ENCODE measurements at regions of chr14 and their contacts with region 1.

Region 1: GRCh38 chr14:35404449-35405303 is at the start of gene NFKBIA:
- DNase-seq: peak; percentile 98
- ATAC-seq: peak; percentile 69
- H3K4me3 ChIP-seq: peak within 1 kb of the TSS; percentile 74 to 99 (median 97)
- H3K4me3 Mint-ChIP-seq: peak within 1 kb of the TSS; percentile 95
- H3K27ac ChIP-seq: peak within 1 kb of the TSS; percentile 96 to 98
- H3K27ac Mint-ChIP-seq: peak within 1 kb of the TSS; percentile 99
- H3K4me1 ChIP-seq: peaks cover 49 to 53% of the 10 kb centered on the region in 2 donors
- H3K4me1 Mint-ChIP-seq: peaks cover 60% of the 10 kb centered on the region
- H3K27me3 ChIP-seq: no peaks in the 10 kb centered on the region
- H3K27me3 Mint-ChIP-seq: no peaks in the 10 kb centered on the region
- CTCF ChIP-seq: peak; percentile 12
- total RNA-seq, gene NFKBIA: 287 and 308 TPM in 2 replicates

Region 2: DNA sequence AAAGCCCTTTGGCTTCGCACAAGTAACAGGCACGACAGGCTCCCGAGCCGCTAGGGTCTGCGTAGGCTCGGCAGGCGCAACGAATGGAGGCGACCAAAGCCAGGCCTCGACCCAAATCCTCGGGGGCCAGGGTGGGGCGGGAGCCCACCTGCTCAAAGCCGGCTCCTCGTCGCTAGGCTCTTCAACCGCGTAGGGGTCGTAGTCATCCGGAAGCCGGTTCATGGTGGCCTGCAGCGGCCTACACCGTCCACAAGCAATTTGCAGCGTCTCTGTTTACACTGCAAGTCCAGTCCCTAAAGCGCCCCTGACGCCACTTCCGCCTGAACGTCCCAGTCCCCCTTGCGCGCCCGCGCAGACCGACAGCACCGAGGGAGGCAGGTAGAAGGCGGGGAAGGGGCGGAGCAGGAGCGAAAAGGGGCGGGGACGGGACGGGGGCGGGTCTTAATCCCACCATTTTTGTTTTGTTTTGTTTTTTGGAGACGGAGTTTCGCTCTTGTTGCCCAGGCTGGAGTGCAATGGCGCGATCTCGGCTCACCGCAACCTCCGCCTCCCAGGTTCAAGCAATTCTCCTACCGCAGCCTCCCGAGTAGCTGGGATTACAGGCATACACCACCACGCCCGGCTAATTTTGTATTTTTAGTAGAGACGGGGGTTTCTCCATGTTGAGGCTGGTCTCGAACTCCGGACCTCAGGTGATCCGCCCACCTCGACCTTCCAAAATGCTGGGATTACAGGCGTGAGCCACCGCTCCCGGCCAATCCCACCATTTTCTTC is 865.1 kb before region 1 on chr14 and contains the start of gene EAPP:
- CTCF ChIA-PET with region 1: no interaction called
- POLR2A ChIA-PET with region 1: interaction called, 3 read pairs
- intact Hi-C with region 1: loop called (anchors 5 kb)
- DNase-seq: peak; percentile 96
- ATAC-seq: peak; percentile 99
- H3K4me3 ChIP-seq: peak within 1 kb of the TSS; percentile 44 to 97 (median 89)
- H3K4me3 Mint-ChIP-seq: peak within 1 kb of the TSS; percentile 99
- H3K27ac ChIP-seq: peak within 1 kb of the TSS; percentile 91 to 97
- H3K27ac Mint-ChIP-seq: peak within 1 kb of the TSS; percentile 99
- H3K4me1 ChIP-seq: peaks cover 18 to 24% of the 10 kb centered on the region in 2 donors
- H3K4me1 Mint-ChIP-seq: peaks cover 21% of the 10 kb centered on the region
- H3K27me3 ChIP-seq: no peaks in the 10 kb centered on the region
- H3K27me3 Mint-ChIP-seq: no peaks in the 10 kb centered on the region
- CTCF ChIP-seq: no peak
- total RNA-seq, gene EAPP: 54.8 and 58.0 TPM in 2 replicates

Region 3: DNA sequence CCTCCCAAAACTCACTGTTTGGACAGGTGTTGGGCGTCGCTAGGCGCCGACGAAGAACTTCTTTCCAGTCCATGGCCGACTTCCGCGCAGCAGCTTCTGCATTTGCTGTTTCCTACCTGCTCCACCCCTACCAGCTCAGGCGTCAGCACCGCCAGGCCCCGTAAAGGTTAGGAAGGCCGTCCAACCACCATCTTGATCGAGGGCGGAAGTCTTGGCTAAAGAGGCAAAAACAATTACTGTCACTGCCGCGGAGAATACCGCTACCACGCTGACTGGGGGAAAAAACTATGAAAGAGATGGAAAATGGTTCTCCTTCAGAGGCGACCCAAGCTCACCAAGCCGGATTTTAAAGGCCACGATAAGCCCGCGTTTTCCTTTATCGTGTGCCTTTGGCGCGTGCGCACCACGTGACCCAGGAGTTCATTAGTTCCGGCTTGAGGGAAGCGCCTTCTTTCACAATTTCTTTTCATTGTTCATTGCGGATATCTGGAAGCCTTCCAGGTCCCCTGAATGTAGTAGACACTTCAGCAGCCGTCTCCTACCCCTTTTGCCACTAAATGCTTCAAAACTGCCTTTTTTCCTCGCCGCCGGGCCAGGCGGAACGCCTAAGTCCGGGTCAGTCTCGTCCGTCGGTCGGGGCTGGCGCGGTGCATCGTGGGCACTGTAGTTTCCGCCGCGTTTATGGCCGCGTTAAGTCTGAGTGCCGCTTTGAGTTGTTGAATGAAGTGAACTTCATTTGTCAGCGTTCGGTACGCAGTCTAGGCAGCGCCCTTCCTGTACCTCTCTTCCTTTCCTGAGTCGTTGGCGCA is 282.6 kb before region 1 on chr14 and contains the starts of genes PPP2R3C and PRORP:
- CTCF ChIA-PET with region 1: interaction called, 7 read pairs
- POLR2A ChIA-PET with region 1: interaction called, 30 read pairs
- intact Hi-C with region 1: loop called (anchors 1 kb)
- DNase-seq: peak; percentile 97
- ATAC-seq: peak; percentile 89
- H3K4me3 ChIP-seq: peak within 1 kb of the TSS; percentile 70 to 97 (median 77)
- H3K4me3 Mint-ChIP-seq: peak within 1 kb of the TSS; percentile 100
- H3K27ac ChIP-seq: peak within 1 kb of the TSS; percentile 94 to 100
- H3K27ac Mint-ChIP-seq: peak within 1 kb of the TSS; percentile 99
- H3K4me1 ChIP-seq: peaks cover 19 to 24% of the 10 kb centered on the region in 2 donors
- H3K4me1 Mint-ChIP-seq: peaks cover 53% of the 10 kb centered on the region
- H3K27me3 ChIP-seq: no peaks in the 10 kb centered on the region
- H3K27me3 Mint-ChIP-seq: no peaks in the 10 kb centered on the region
- CTCF ChIP-seq: no peak
- total RNA-seq, gene PPP2R3C: 40.8 and 41.7 TPM in 2 replicates
- total RNA-seq, gene PRORP: 16.4 and 22.2 TPM in 2 replicates

Region 4: GRCh38 chr14:35229495-35230089 is 175.1 kb before region 1 on chr14:
- CTCF ChIA-PET with region 1: interaction called, 302 read pairs
- POLR2A ChIA-PET with region 1: interaction called, 9 read pairs
- intact Hi-C with region 1: loop called (anchors 1 kb)
- DNase-seq: peak; percentile 57
- ATAC-seq: peak; percentile 36
- H3K4me3 ChIP-seq: no peak overlapping the region
- H3K4me3 Mint-ChIP-seq: no peak overlapping the region
- H3K27ac ChIP-seq: no peak overlapping the region
- H3K27ac Mint-ChIP-seq: no peak overlapping the region
- H3K4me1 ChIP-seq: no peaks in the 10 kb centered on the region
- H3K4me1 Mint-ChIP-seq: no peaks in the 10 kb centered on the region
- H3K27me3 ChIP-seq: no peaks in the 10 kb centered on the region
- H3K27me3 Mint-ChIP-seq: no peaks in the 10 kb centered on the region
- CTCF ChIP-seq: peak; percentile 67

Region 5: DNA sequence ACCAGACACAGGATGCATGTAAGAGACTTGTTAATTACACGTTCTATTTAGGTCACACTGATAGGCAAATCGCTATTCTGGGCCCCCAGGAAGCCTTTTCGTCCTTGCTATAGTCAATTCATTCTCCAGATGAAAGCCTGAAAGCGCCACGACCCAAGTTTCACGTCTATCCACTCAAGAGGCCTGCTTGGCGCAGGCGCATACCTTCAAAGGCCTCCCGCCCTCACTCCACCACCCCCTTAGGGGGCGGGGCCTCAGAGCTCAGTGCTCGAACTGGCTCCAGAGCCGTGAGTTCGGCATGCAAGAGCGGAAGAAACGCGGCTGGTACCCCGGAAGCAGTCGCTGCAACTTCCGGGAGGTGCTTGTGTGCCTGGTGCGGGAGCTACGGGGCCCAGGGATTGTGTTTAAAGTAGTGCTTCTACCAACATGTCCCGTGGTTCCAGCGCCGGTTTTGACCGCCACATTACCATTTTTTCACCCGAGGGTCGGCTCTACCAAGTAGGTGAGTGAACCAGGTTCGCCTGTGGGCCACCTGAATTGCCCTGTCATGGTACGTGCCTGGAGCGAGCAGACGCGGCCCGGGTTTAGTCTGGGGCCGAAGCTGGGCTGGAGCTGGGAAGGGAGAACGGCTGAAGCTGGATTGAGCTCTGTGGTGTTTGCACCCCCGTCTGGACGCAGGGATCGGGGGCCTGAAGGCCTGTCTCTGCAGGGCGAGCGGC is 112.5 kb before region 1 on chr14 and contains the start of gene PSMA6:
- CTCF ChIA-PET with region 1: interaction called, 30 read pairs
- POLR2A ChIA-PET with region 1: interaction called, 59 read pairs
- intact Hi-C with region 1: loop called (anchors 1 kb)
- DNase-seq: peak; percentile 99
- ATAC-seq: peak; percentile 98
- H3K4me3 ChIP-seq: peak within 1 kb of the TSS; percentile 71 to 96 (median 93)
- H3K4me3 Mint-ChIP-seq: peak within 1 kb of the TSS; percentile 99
- H3K27ac ChIP-seq: peak within 1 kb of the TSS; percentile 75 to 93
- H3K27ac Mint-ChIP-seq: peak within 1 kb of the TSS; percentile 96
- H3K4me1 ChIP-seq: peaks cover 34 to 44% of the 10 kb centered on the region in 2 donors
- H3K4me1 Mint-ChIP-seq: peaks cover 44% of the 10 kb centered on the region
- H3K27me3 ChIP-seq: no peaks in the 10 kb centered on the region
- H3K27me3 Mint-ChIP-seq: no peaks in the 10 kb centered on the region
- CTCF ChIP-seq: no peak
- total RNA-seq, gene PSMA6: 70.6 and 86.8 TPM in 2 replicates

Region 6: GRCh38 chr14:35643513-35643912 is 238.8 kb after region 1 on chr14:
- CTCF ChIA-PET with region 1: no interaction called
- POLR2A ChIA-PET with region 1: no interaction called
- intact Hi-C with region 1: no loop called
- DNase-seq: no peak
- ATAC-seq: no peak
- H3K4me3 ChIP-seq: no peak overlapping the region
- H3K4me3 Mint-ChIP-seq: no peak overlapping the region
- H3K27ac ChIP-seq: no peak overlapping the region
- H3K27ac Mint-ChIP-seq: no peak overlapping the region
- H3K4me1 ChIP-seq: no peaks in the 10 kb centered on the region
- H3K4me1 Mint-ChIP-seq: no peaks in the 10 kb centered on the region
- H3K27me3 ChIP-seq: no peaks in the 10 kb centered on the region
- H3K27me3 Mint-ChIP-seq: no peaks in the 10 kb centered on the region
- CTCF ChIP-seq: no peak

Region 7: GRCh38 chr14:35826218-35826951 is 421.7 kb after region 1 on chr14 and contains the start of gene BRMS1L:
- CTCF ChIA-PET with region 1: no interaction called
- POLR2A ChIA-PET with region 1: interaction called, 7 read pairs
- intact Hi-C with region 1: loop called (anchors 1 kb)
- DNase-seq: peak; percentile 97
- ATAC-seq: peak; percentile 95
- H3K4me3 ChIP-seq: peak within 1 kb of the TSS; percentile 81 to 100 (median 90)
- H3K4me3 Mint-ChIP-seq: peak within 1 kb of the TSS; percentile 89
- H3K27ac ChIP-seq: peak within 1 kb of the TSS; percentile 75
- H3K27ac Mint-ChIP-seq: peak within 1 kb of the TSS; percentile 91
- H3K4me1 ChIP-seq: peaks cover 7 to 11% of the 10 kb centered on the region in 2 donors
- H3K4me1 Mint-ChIP-seq: peaks cover 25% of the 10 kb centered on the region
- H3K27me3 ChIP-seq: no peaks in the 10 kb centered on the region
- H3K27me3 Mint-ChIP-seq: no peaks in the 10 kb centered on the region
- CTCF ChIP-seq: no peak
- total RNA-seq, gene BRMS1L: 4.7 and 6.3 TPM in 2 replicates

Region 8: GRCh38 chr14:36254020-36254624 is 849.4 kb after region 1 on chr14:
- CTCF ChIA-PET with region 1: no interaction called
- POLR2A ChIA-PET with region 1: no interaction called
- intact Hi-C with region 1: no loop called
- DNase-seq: no peak
- ATAC-seq: no peak
- H3K4me3 ChIP-seq: no peak overlapping the region
- H3K4me3 Mint-ChIP-seq: no peak overlapping the region
- H3K27ac ChIP-seq: no peak overlapping the region
- H3K27ac Mint-ChIP-seq: no peak overlapping the region
- H3K4me1 ChIP-seq: no peaks in the 10 kb centered on the region
- H3K4me1 Mint-ChIP-seq: no peaks in the 10 kb centered on the region
- H3K27me3 ChIP-seq: no peaks in the 10 kb centered on the region
- H3K27me3 Mint-ChIP-seq: peaks cover 4% of the 10 kb centered on the region
- CTCF ChIP-seq: no peak

Measured in B cell (primary cell).